ENCODE measurements at regions of chr12 and their contacts with region 1.

Region 1: DNA sequence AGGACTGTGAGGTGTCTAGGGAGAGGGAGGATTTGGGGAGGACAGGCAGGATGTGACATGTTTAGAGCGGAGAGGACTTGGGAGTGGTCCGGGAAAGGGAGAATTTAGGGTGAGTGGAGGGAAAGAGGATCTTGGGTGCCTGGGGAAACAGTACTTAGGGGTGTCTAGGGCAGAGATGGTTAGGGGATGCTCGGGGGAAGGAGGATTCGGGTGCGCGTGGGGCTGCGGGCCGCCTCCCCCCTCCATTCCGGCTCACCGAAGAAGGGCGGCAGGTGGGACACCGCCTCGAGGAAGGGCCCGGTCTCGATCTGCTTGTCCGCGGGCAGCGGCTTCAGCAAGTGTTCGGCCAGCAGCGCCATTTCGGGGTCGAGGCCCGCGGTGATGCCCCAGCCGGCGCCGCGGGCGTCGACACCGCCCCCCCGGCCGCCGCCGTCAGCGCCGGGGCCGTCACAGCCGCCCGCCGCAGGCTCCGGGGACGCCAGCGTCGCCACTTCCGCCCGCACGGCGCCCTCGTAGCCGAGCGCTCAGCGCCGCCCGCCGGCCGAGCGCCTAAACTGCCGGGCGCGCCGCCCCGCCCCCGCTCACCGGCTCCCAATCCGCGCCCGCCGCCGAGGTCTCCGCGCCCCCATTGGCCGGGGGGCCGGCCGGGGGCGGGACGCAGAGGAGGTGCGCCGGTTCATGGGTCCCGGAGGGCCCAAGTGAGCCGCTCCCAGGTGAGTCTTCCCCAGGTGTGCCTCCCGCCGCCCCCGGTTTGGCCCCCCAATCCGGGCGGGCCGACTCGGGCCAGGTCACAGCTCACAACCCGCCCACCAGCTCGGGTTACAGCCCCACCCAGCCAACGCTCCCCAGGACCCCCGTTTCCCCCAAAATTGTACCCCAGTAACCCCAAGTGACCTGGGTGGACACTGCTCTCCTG is at the start of gene GLTP:
- DNase-seq: peak; percentile 88 to 95 (median 91)
- ATAC-seq: peak; percentile 93
- H3K4me3 ChIP-seq: peak within 1 kb of the TSS; percentile 60
- H3K4me1 ChIP-seq: peaks cover 18% of the 10 kb centered on the region
- CTCF ChIP-seq: peak; percentile 77
- total RNA-seq, gene GLTP: 58.8 to 101 (median 98.9) TPM

Region 2: DNA sequence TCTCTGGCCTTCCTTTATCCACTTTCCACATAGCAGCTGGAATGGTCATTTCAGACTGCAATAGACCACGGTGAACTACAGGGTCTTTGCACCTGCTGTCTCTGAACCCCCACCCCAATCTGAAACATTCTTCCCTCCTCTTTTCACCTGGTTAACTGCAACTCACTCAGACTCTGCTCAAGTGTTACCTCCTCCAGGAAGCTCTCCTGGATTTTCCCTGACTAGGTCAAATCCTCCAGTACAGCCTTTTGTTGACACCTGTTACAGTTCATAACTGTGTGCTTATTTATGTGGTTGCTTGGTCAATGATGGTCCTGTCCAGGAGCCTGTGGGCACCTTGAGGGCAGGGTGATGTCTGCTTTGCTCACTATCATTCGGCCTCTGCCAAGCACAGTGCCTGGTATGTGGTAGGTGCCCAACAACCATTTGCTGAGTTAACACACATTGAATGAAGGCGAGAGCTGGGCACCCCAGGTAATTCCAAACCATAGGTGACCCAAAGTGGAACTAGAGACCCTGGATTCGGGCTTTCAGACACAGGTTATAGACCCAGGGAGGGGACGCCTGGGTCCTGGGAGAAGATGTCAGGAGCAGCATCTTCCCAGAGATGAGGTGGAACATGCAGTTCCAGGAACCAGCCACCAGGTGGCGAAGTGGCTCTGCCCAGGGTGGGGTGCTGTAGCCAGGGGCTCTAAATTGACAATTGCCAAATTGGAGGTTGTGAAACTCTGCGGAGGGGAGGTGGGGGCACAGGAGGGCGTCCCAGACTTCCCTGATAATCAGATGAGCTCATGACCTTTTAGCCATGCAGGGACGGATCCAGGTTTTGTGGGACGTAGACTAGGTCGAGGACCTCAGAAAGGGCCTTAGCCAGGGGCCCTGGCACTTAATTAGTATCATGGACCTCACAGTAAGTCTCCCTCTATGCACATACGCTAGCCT is 75.2 kb before region 1 on chr12:
- intact Hi-C with region 1: loop called in 1 of 2 experiments (anchors 10 kb)
- DNase-seq: peak in 2 of 3 donors; percentile 75 to 78
- ATAC-seq: peak; percentile 89
- H3K4me3 ChIP-seq: no peak overlapping the region
- H3K4me1 ChIP-seq: no peaks in the 10 kb centered on the region
- CTCF ChIP-seq: peak; percentile 93

Measured in mucosa of descending colon (tissue), 3 donors.